BJ (cell line): ENCODE measurements at regions of chr2 and their contacts with region 1.

Region 1: GRCh38 chr2:234611209-234611608 is 114.3 kb upstream of the ARL4C start:
- DNase-seq: no peak
- H3K4me3 ChIP-seq: no peak overlapping the region
- H3K27me3 ChIP-seq: no peaks in the 10 kb centered on the region
- CTCF ChIP-seq: peak; percentile 24; the same call in 1 of the 2 replicates

Region 2: DNA sequence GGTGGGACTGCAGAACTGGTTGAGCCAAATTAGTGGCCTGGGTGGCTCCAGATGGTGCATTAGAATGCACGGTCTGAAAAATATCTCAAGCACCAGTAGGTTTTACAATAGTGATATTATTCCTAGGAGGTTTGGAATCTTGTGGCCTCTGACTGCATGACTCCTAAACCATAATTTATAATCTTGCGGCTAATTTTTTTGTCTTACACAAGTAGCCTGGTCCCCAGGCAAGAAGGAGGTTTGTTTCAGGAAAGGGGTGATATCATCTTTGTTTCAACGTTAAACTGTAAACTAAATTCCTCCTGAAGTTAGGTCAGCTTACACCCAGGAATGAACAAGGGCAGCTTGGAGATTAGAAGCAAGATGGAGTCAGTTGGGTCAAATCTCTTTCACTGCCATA is 15.4 kb before region 1 on chr2:
- CTCF ChIA-PET with region 1: interaction called, 13 read pairs
- POLR2A ChIA-PET with region 1: no interaction called
- DNase-seq: peak; percentile 63
- H3K4me3 ChIP-seq: no peak overlapping the region
- H3K27me3 ChIP-seq: no peaks in the 10 kb centered on the region
- CTCF ChIP-seq: no peak

Region 3: GRCh38 chr2:234632527-234633391 is 21.6 kb after region 1 on chr2:
- CTCF ChIA-PET with region 1: no interaction called
- POLR2A ChIA-PET with region 1: no interaction called
- DNase-seq: peak; percentile 88
- H3K4me3 ChIP-seq: no peak overlapping the region
- H3K27me3 ChIP-seq: no peaks in the 10 kb centered on the region
- CTCF ChIP-seq: no peak